AG04450 (cell line): ENCODE measurements at regions of chr2 and their contacts with region 1.

Region 1: DNA sequence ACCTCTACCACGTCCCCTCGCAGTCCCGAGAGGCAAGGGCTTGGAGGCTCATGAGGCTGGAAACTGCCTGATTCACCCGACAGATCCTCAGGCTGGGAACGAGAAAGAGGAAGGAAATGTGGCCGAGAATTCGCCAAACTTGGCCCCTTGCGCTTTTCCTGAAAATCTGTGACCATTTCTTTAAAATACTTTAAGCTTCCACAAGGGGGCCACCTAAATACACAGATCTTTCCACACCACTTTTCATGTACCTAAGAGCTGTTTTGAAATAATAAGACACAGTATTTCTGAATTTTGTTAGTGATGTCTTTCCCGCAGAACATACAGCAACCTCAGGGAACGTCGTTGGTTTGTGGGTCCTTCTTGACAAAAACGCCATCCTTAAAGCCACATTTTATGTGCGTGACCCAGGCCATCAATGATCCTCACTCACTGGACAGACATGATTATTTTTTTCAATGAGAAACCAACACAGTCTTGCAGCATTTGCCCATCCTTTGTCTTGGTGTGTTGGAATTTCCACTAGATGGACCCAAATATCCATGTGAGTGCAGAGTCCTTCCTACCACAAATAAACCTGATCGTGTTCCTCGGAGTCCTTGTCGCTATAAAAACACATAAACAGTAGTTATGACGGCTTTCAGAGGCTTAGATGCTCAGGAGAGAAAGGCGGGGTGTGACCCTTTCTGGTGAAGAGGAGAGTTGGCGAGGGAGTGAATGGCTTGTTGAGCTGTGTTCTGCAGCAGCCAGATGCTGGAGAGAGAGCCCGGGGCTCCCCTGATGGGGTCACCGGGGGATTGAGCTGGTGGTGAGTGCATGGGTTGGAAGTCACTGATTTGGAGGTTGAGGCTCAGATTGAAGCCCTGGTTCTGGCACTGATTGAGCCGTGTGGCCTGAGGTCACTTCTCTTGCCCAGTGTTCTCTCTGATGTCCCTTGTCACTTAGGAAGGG is 25.0 kb downstream of the DCDC2C start:
- DNase-seq: peak; percentile 26
- H3K4me3 ChIP-seq: peak overlapping the region; percentile 36
- H3K27ac ChIP-seq: no peak overlapping the region
- H3K27me3 ChIP-seq: peaks cover 2% of the 10 kb centered on the region
- CTCF ChIP-seq: peak; percentile 61

Region 2: GRCh38 chr2:3677436-3677835 is 50.9 kb before region 1 on chr2:
- CTCF ChIA-PET with region 1: no interaction called
- POLR2A ChIA-PET with region 1: no interaction called
- DNase-seq: no peak
- H3K4me3 ChIP-seq: no peak overlapping the region
- H3K27ac ChIP-seq: no peak overlapping the region
- H3K27me3 ChIP-seq: peaks cover 13% of the 10 kb centered on the region
- CTCF ChIP-seq: no peak

Region 3: DNA sequence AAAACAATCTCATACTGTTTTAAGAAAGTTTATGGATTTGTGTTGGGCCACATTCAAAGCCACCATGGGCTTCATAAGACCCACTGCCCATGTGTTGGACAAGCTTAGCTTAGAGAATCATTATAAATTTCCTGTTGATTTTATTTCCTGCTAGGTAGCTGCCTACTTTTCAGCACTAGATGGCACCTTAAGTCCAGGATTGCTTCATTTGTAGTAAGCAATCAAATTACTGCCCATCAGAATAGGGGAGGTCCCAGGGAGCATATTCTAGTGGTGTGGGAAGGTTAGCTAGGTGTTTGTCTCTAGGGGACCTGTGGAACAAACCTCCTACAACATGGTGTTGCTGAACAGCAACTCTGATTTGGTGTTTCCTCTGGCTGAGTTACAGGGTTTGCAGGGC is 36.0 kb before region 1 on chr2:
- CTCF ChIA-PET with region 1: interaction called, 30 read pairs
- POLR2A ChIA-PET with region 1: no interaction called
- DNase-seq: no peak
- H3K4me3 ChIP-seq: no peak overlapping the region
- H3K27ac ChIP-seq: no peak overlapping the region
- H3K27me3 ChIP-seq: peaks cover 6% of the 10 kb centered on the region
- CTCF ChIP-seq: peak; percentile 59

Region 4: GRCh38 chr2:3738454-3738853 is 10.1 kb after region 1 on chr2:
- CTCF ChIA-PET with region 1: interaction called, 25 read pairs
- POLR2A ChIA-PET with region 1: no interaction called
- DNase-seq: no peak
- H3K4me3 ChIP-seq: no peak overlapping the region
- H3K27ac ChIP-seq: no peak overlapping the region
- H3K27me3 ChIP-seq: peaks cover 13% of the 10 kb centered on the region
- CTCF ChIP-seq: peak; percentile 67

Region 5: DNA sequence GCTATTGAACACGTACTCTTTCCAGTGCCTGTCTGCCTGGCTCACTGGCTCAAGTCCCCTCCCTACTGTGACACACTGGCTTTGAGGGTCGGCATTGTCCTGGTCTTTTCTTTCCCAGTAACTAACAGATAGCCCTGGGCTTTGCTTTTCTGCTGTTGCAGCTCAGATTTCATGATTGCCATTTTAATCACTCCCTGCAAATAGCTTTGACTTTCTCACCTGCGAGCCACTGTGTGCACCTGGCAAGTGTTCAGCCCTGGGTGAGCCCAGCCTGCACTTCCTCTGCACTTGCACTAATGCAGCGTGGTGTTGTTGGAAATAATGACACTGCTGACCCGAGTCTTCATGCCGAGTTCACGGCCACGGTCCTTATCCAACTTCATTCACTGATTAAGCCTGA is 27.9 kb after region 1 on chr2:
- CTCF ChIA-PET with region 1: interaction called, 11 read pairs
- POLR2A ChIA-PET with region 1: no interaction called
- DNase-seq: no peak
- H3K4me3 ChIP-seq: no peak overlapping the region
- H3K27ac ChIP-seq: no peak overlapping the region
- H3K27me3 ChIP-seq: peaks cover 7% of the 10 kb centered on the region
- CTCF ChIP-seq: no peak

Region 6: GRCh38 chr2:3805201-3805939 is 77.0 kb after region 1 on chr2:
- CTCF ChIA-PET with region 1: interaction called, 23 read pairs
- POLR2A ChIA-PET with region 1: no interaction called
- DNase-seq: no peak
- H3K4me3 ChIP-seq: no peak overlapping the region
- H3K27ac ChIP-seq: no peak overlapping the region
- H3K27me3 ChIP-seq: no peaks in the 10 kb centered on the region
- CTCF ChIP-seq: peak; percentile 38